GM12878 (cell line): ENCODE measurements at regions of chr2 and their contacts with region 1.

Region 1: GRCh38 chr2:70142590-70143313 is 48.1 kb downstream of the C2orf42 start:
- DNase-seq: peak; percentile 98
- ATAC-seq: peak; percentile 71
- H3K4me3 ChIP-seq: peak overlapping the region; percentile 60
- H3K27ac ChIP-seq: peak overlapping the region; percentile 97
- H3K4me1 ChIP-seq: peaks cover 38% of the 10 kb centered on the region
- H3K27me3 ChIP-seq: no peaks in the 10 kb centered on the region
- CTCF ChIP-seq: peak; percentile 97 to 100 (median 97); a peak in 5 of 6 replicates
- EP300 ChIP-seq: peak; percentile 35 to 94; a peak in 2 of 4 replicates
- POLR2A ChIP-seq: peak; percentile 26; the same call in 1 of the 2 replicates
- RAD21 ChIP-seq: peak; percentile 91

Region 2: DNA sequence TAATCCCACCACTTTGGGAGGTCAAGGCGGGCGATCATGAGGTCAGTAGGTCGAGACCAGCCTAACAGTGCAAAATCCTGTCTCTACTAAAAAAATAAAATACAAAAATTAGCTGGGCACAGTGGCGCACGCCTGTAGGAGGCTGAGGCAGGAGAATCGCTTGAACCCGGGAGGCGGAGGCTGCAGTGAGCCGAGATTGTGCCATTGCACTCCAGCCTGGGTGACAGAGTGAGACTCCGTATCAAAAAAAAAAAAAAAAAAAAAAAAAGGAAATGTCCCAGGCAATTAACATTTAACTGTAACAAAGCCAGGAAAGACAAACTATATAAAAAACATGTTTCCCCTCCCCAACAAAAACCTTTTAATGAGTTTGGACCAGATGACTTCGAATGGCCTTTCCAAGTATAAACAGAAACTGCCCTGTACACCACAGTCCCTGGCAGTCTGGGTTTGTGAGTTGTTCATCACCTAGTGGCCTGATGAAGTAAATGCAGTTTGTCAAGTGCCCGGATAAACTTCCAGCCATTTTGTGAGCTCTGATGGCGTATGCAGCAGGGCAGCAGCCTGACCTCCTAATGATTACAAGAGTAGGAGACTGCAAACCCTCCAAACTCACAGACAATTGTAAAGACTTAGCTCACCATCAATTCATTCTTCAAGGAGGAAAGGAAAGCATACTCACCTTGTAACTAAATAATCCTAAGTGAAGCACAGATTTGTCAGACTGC is 72.0 kb before region 1 on chr2:
- CTCF ChIA-PET with region 1: interaction called, 18 read pairs
- POLR2A ChIA-PET with region 1: interaction called, 4 read pairs
- RAD21 ChIA-PET with region 1: interaction called, 31 read pairs
- SMC1A ChIA-PET with region 1: interaction called, 26 read pairs
- in situ Hi-C with region 1: no loop called
- intact Hi-C with region 1: loop called (anchors 1 kb)
- DNase-seq: no peak
- ATAC-seq: peak; percentile 86
- H3K4me3 ChIP-seq: no peak overlapping the region
- H3K27ac ChIP-seq: peak overlapping the region; percentile 89
- H3K4me1 ChIP-seq: peaks cover 18% of the 10 kb centered on the region
- H3K27me3 ChIP-seq: no peaks in the 10 kb centered on the region
- CTCF ChIP-seq: peak; percentile 80 to 90 (median 86)
- EP300 ChIP-seq: no peak
- POLR2A ChIP-seq: peak; percentile 37; the same call in 1 of the 2 replicates
- RAD21 ChIP-seq: peak; percentile 90

Region 3: GRCh38 chr2:70104231-70105111 is 38.3 kb before region 1 on chr2:
- CTCF ChIA-PET with region 1: interaction called, 12 read pairs
- POLR2A ChIA-PET with region 1: interaction called, 19 read pairs
- RAD21 ChIA-PET with region 1: interaction called, 13 read pairs
- SMC1A ChIA-PET with region 1: interaction called, 123 read pairs
- in situ Hi-C with region 1: no loop called
- intact Hi-C with region 1: loop called (anchors 1 kb)
- DNase-seq: no peak
- ATAC-seq: peak; percentile 17; the same call in 2 of the 3 replicates
- H3K4me3 ChIP-seq: peak overlapping the region; percentile 53
- H3K27ac ChIP-seq: peak overlapping the region; percentile 97
- H3K4me1 ChIP-seq: peaks cover 38% of the 10 kb centered on the region
- H3K27me3 ChIP-seq: no peaks in the 10 kb centered on the region
- CTCF ChIP-seq: no peak
- EP300 ChIP-seq: no peak
- POLR2A ChIP-seq: no peak
- RAD21 ChIP-seq: 0 out of 2 replicates have a peak, but pooled peaks have one; percentile 3

Region 4: DNA sequence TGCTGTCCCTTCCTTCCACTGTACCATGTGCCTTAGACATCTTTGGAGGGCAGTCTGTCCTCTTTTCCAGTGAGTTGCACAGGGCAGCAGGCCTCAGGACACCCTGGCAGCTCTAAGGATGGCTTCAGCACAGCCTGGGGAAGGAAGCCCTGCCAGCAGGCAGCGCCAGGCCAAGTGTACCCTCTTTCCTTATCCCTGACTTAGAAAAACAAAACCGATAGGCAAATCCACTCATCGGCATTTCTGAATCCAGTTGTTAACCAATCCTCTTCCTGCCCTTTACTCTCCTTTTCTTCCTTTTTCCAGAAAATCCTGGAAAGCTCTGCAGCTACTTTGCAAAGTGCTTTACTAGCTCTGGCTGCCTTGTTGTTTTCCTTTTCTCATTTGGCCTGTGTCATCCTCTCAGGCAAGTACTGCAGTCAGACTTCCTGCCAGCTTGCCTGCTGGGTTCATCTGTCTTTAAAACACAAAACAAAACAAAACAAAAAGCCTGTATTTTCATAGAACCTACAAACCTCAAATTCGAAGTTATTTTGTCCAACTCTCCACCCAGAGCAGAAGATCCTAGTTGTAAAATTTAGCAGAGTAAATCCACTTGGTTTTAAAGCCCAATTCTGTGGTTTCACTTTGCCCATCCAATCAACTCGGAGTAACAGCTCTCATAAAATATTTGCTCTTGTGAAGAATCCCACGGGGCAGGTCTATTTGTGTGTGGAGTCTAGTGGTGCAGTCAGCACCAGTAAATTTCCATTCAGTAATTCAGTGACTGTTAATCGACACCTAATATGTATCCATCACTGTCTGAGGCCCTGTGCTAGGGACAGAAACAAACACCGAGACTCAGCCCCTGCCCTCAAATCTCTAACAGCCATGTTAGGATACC is 10.3 kb before region 1 on chr2:
- CTCF ChIA-PET with region 1: interaction called, 6 read pairs
- POLR2A ChIA-PET with region 1: interaction called, 263 read pairs
- RAD21 ChIA-PET with region 1: interaction called, 41 read pairs
- SMC1A ChIA-PET with region 1: interaction called, 311 read pairs
- in situ Hi-C with region 1: no loop called
- intact Hi-C with region 1: loop called (anchors 1 kb)
- DNase-seq: no peak
- ATAC-seq: peak; percentile 63
- H3K4me3 ChIP-seq: peak overlapping the region; percentile 67
- H3K27ac ChIP-seq: peak overlapping the region; percentile 99
- H3K4me1 ChIP-seq: peaks cover 49% of the 10 kb centered on the region
- H3K27me3 ChIP-seq: no peaks in the 10 kb centered on the region
- CTCF ChIP-seq: no peak
- EP300 ChIP-seq: no peak
- POLR2A ChIP-seq: peak; percentile 73
- RAD21 ChIP-seq: no peak

Region 5: GRCh38 chr2:70190418-70191243 is 47.9 kb after region 1 on chr2 and contains the start of gene C2orf42:
- CTCF ChIA-PET with region 1: interaction called, 3 read pairs
- POLR2A ChIA-PET with region 1: interaction called, 4 read pairs
- RAD21 ChIA-PET with region 1: interaction called, 11 read pairs
- SMC1A ChIA-PET with region 1: interaction called, 6 read pairs
- in situ Hi-C with region 1: no loop called
- intact Hi-C with region 1: loop called (anchors 1 kb)
- DNase-seq: peak; percentile 97
- ATAC-seq: peak; percentile 94
- H3K4me3 ChIP-seq: peak within 1 kb of the TSS; percentile 72
- H3K27ac ChIP-seq: peak within 1 kb of the TSS; percentile 88
- H3K4me1 ChIP-seq: no peaks in the 10 kb centered on the region; the same call in 1 of the 2 replicates
- H3K27me3 ChIP-seq: no peaks in the 10 kb centered on the region
- CTCF ChIP-seq: peak; percentile 1 to 14 (median 7); a peak in 2 of 6 replicates
- EP300 ChIP-seq: peak in 1 of 2 experiments; percentile 12; a peak in 1 of 4 replicates
- POLR2A ChIP-seq: peak; percentile 95
- RAD21 ChIP-seq: 0 out of 2 replicates have a peak, but pooled peaks have one; percentile 15
- polyA plus RNA-seq, gene C2orf42: 5.5 to 7.3 TPM